Activated naive CD4-positive, alpha-beta T cell treated with anti-CD3 and anti-CD28 coated beads for 36 hours (primary cell): ENCODE measurements at regions of chr10 and their contacts with region 1.

Region 1: DNA sequence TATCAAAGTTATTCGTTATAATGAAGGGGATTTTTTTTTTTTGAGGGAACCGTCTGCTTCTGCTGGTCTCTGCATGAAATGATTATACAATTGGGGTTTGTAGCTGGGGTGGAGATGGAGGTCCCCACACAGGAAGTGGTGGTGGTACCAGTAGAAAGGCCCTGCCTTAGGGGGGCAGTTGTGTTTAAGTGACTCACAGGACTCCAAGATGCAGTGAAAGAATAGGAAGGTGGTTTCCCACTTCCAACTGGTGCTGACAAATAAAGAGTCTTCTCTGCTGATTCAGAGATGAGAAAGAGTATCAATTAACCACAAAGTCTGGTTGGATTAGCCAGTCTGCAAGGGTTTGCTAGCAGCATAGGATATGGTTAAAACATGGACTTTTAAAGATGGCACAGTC is 376.0 kb downstream of the SORCS3 start:
- DNase-seq: peak; percentile 66
- H3K4me3 Mint-ChIP-seq: no peak overlapping the region
- H3K27ac Mint-ChIP-seq: no peak overlapping the region
- H3K4me1 Mint-ChIP-seq: peaks cover 32% of the 10 kb centered on the region
- H3K27me3 Mint-ChIP-seq: no peaks in the 10 kb centered on the region

Region 2: GRCh38 chr10:104601166-104601565 is 415.9 kb before region 1 on chr10:
- CTCF ChIA-PET with region 1: no interaction called
- intact Hi-C with region 1: no loop called
- DNase-seq: no peak
- H3K4me3 Mint-ChIP-seq: no peak overlapping the region
- H3K27ac Mint-ChIP-seq: no peak overlapping the region
- H3K4me1 Mint-ChIP-seq: no peaks in the 10 kb centered on the region
- H3K27me3 Mint-ChIP-seq: peaks cover 5% of the 10 kb centered on the region

Region 3: GRCh38 chr10:104937572-104937971 is 79.5 kb before region 1 on chr10:
- CTCF ChIA-PET with region 1: no interaction called
- intact Hi-C with region 1: loop called (anchors 5 kb)
- DNase-seq: peak; percentile 7
- H3K4me3 Mint-ChIP-seq: no peak overlapping the region
- H3K27ac Mint-ChIP-seq: no peak overlapping the region
- H3K4me1 Mint-ChIP-seq: peaks cover 54% of the 10 kb centered on the region
- H3K27me3 Mint-ChIP-seq: no peaks in the 10 kb centered on the region

Region 4: GRCh38 chr10:105063796-105064195 is 46.7 kb after region 1 on chr10:
- CTCF ChIA-PET with region 1: no interaction called
- intact Hi-C with region 1: no loop called
- DNase-seq: peak; percentile 59
- H3K4me3 Mint-ChIP-seq: no peak overlapping the region
- H3K27ac Mint-ChIP-seq: no peak overlapping the region
- H3K4me1 Mint-ChIP-seq: peaks cover 5% of the 10 kb centered on the region
- H3K27me3 Mint-ChIP-seq: no peaks in the 10 kb centered on the region

Region 5: GRCh38 chr10:105284476-105285215 is 267.5 kb after region 1 on chr10:
- CTCF ChIA-PET with region 1: no interaction called
- intact Hi-C with region 1: no loop called
- DNase-seq: no peak
- H3K4me3 Mint-ChIP-seq: no peak overlapping the region
- H3K27ac Mint-ChIP-seq: no peak overlapping the region
- H3K4me1 Mint-ChIP-seq: no peaks in the 10 kb centered on the region
- H3K27me3 Mint-ChIP-seq: no peaks in the 10 kb centered on the region